ENCODE measurements at regions of chr20 and their contacts with region 1.

Region 1: GRCh38 chr20:59933849-59934596 is 586 bp upstream of the SYCP2 start:
- DNase-seq: peak; percentile 79
- ATAC-seq: peak; percentile 82
- H3K4me3 Mint-ChIP-seq: peak overlapping the region; percentile 69
- H3K27ac Mint-ChIP-seq: peak overlapping the region; percentile 61
- H3K4me1 Mint-ChIP-seq: peaks cover 26% of the 10 kb centered on the region
- H3K27me3 Mint-ChIP-seq: no peaks in the 10 kb centered on the region
- CTCF ChIP-seq: peak; percentile 98

Region 2: DNA sequence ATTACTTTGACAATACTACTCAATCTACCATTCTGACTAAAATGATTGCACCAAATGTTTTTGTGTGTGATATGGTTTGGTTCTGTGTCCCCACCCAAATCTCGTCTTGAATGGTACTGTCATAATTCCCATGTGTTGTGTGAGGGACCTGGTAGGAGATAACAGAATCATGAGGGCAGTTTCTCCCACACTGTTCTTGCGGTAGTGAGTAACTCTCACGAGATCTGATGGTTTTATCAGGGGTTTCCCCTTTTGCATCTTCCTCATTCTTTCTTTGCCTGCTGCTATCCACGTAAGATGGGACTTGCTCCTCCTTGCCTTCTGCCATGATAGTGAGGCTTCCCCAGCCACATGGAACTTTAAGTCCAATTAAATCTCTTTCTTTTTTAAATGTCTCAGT is 21.4 kb before region 1 on chr20:
- CTCF ChIA-PET with region 1: interaction called, 12 read pairs
- POLR2A ChIA-PET with region 1: no interaction called
- intact Hi-C with region 1: no loop called
- DNase-seq: no peak
- ATAC-seq: no peak
- H3K4me3 Mint-ChIP-seq: no peak overlapping the region
- H3K27ac Mint-ChIP-seq: no peak overlapping the region
- H3K4me1 Mint-ChIP-seq: no peaks in the 10 kb centered on the region
- H3K27me3 Mint-ChIP-seq: no peaks in the 10 kb centered on the region
- CTCF ChIP-seq: no peak

Region 3: GRCh38 chr20:59923514-59923913 is 10.5 kb before region 1 on chr20:
- CTCF ChIA-PET with region 1: interaction called, 19 read pairs
- POLR2A ChIA-PET with region 1: interaction called, 3 read pairs
- intact Hi-C with region 1: no loop called
- DNase-seq: no peak
- ATAC-seq: no peak
- H3K4me3 Mint-ChIP-seq: no peak overlapping the region
- H3K27ac Mint-ChIP-seq: no peak overlapping the region
- H3K4me1 Mint-ChIP-seq: no peaks in the 10 kb centered on the region
- H3K27me3 Mint-ChIP-seq: peaks cover 6% of the 10 kb centered on the region
- CTCF ChIP-seq: no peak

Region 4: DNA sequence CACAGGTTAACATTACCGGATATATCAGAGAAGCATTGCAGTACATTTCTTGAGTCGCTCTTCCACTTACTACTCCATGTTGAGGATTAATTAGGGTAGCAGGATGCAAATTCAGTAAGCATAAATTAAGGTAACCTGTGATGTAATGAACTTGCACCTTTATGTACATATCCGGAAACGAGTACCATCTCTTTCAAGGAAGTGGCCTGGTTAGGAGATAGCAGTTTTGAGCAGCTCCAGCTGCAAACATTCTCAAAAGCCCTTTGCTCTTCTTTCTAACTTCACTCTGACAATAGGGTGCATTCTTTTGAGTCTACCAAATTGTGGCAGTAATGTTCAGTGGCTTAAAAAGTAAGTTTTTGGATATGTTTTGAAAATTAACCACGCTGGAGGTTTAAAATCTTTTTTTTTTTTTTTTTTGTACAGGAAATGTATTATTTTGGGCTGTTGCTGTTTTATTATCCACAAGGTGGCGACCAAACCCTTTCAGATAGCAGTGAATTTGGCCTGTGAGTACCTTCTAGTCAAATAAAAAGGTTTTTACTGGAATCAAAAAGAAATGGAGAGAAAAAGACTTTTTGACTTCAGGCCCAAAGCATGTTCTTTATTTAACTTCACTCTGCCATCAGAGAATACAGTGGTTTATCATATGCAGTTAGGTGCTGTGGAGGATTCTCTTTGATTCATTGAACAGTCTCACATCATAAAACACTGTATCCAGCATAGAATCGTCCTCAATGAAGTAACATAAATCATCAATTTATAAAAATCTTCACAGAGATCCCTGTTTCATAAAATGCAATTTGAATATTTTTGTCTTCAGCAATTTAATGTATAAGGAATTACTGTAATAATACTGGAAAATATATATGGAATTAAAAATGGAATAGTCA is 15.1 kb after region 1 on chr20:
- CTCF ChIA-PET with region 1: interaction called, 26 read pairs
- POLR2A ChIA-PET with region 1: no interaction called
- intact Hi-C with region 1: no loop called
- DNase-seq: peak; percentile 53
- ATAC-seq: peak; percentile 79
- H3K4me3 Mint-ChIP-seq: peak overlapping the region; percentile 35
- H3K27ac Mint-ChIP-seq: peak overlapping the region; percentile 90
- H3K4me1 Mint-ChIP-seq: peaks cover 30% of the 10 kb centered on the region
- H3K27me3 Mint-ChIP-seq: no peaks in the 10 kb centered on the region
- CTCF ChIP-seq: peak; percentile 83